Mammary epithelial cell (primary cell): ENCODE measurements at regions of chr19 and their contacts with region 1.

Region 1: DNA sequence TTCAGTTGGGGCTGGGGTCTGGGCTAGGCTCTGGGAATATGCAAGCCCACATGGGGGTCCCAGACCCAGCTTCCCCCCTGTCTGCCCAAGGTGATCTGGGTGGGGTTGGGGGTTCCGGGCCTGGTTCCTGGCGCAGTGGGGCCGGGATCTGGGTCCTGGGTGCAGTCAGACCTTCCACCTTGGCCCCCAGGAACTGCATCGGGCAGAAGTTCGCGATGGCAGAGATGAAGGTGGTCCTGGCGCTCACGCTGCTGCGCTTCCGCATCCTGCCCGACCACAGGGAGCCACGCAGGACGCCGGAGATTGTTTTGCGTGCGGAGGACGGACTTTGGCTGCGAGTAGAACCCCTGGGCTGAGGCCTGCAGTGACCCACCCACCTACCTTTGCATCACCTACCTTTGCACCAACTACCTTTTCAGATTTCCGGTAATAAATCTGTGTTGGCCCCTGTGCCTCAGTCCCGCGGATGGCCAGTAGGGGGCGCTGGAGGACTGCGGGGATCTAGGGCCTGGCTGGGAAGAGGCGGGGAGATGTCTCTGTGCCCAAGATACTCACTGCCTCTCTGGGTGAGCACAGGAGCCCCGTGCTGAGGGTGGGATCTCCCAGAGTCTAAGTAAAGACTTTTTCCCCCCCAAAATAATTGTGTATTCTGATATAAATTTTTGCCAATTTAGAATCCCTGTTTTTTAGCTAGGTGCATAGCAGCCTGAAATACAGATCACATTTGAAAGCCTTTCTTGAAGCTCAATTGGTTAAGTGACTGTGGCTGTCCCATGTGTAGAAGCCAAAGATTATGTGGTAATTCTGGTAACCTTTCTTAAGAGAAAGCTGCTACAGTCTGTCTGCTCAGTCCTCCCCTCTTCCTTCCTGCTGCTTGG is 11.5 kb upstream of the CYP4F3 start:
- DNase-seq: peak; percentile 64
- H3K4me3 ChIP-seq: peak overlapping the region in 1 of 3 experiments; percentile 12
- H3K27ac ChIP-seq: no peak overlapping the region
- H3K4me1 ChIP-seq: peaks cover 3% of the 10 kb centered on the region
- H3K27me3 ChIP-seq: no peaks in the 10 kb centered on the region
- CTCF ChIP-seq: peak; percentile 89 to 94

Region 2: DNA sequence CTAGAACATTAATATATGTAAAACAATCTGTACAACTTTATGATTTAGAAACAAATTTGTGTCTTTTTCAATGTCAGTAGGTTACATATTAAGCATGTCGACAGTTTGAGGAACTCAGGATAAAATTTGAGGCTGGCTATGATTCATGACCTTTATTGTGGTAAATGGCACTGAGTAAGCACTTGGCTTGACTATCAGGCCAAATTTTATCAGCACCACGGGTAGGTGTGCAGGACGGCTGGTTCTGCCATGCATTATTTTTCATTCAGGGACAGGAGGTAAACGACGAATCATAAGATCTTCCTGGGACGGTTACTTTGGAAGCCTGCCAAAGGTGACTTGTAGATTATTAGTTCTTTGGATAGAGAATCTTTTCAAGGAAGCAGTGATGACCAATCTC is 34.2 kb before region 1 on chr19:
- CTCF ChIA-PET with region 1: no interaction called
- dilution Hi-C with region 1: no loop called
- in situ Hi-C with region 1: no loop called
- intact Hi-C with region 1: no loop called
- DNase-seq: peak; percentile 65
- H3K4me3 ChIP-seq: no peak overlapping the region
- H3K27ac ChIP-seq: no peak overlapping the region
- H3K4me1 ChIP-seq: peaks cover 8% of the 10 kb centered on the region
- H3K27me3 ChIP-seq: peaks cover 5% of the 10 kb centered on the region
- CTCF ChIP-seq: no peak

Region 3: DNA sequence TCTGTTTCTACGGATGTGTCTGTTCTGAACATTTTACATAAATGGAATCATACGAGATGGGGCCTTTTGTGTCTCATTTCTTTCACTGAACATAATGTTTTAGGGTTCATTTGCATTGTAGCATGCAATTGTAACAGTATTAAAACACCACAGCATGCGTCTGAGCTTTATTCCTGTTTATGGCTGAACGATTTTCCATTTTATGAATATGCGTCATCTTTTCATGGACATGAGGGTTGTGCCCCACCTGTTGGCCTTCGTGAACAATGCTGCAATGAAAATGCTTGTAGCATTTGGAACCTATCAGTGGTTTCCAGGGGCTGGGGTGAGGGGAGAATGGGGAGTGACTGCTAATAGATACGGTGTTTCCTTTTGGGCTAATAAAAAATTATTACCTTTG is 181.1 kb after region 1 on chr19:
- CTCF ChIA-PET with region 1: no interaction called
- dilution Hi-C with region 1: no loop called
- in situ Hi-C with region 1: no loop called
- intact Hi-C with region 1: loop called (anchors 1 kb)
- DNase-seq: peak; percentile 38
- H3K4me3 ChIP-seq: no peak overlapping the region
- H3K27ac ChIP-seq: no peak overlapping the region
- H3K4me1 ChIP-seq: peaks cover 13% of the 10 kb centered on the region
- H3K27me3 ChIP-seq: peaks cover 2% of the 10 kb centered on the region
- CTCF ChIP-seq: peak in 1 of 2 donors; percentile 62

Region 4: DNA sequence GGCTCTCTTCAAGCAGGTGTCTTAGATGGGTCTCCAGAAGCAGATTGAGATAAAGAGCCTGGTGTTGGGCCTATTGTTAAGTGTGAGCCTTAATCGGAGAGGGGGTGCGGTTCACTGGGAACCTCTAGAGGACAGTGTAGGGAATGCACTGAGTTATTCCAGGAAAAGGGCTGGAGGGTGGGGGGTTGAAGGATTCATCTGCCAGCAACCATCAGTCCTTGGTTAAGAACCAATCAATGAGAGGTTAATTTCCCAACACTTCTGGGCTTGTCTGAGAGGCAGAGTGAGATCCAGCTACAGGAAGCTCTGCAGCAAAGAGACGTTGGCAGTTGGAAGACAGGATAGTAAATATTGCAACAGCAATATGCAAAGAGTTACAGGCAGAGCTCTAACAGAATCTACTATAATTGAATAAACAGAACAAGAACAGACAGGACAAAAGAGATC is 239.9 kb after region 1 on chr19:
- CTCF ChIA-PET with region 1: no interaction called
- dilution Hi-C with region 1: no loop called
- in situ Hi-C with region 1: loop called in 1 of 2 experiments (anchors 10 kb)
- intact Hi-C with region 1: loop called (anchors 1 kb)
- DNase-seq: peak; percentile 75
- H3K4me3 ChIP-seq: no peak overlapping the region
- H3K27ac ChIP-seq: no peak overlapping the region
- H3K4me1 ChIP-seq: peaks cover 12% of the 10 kb centered on the region
- H3K27me3 ChIP-seq: no peaks in the 10 kb centered on the region
- CTCF ChIP-seq: peak; percentile 80 to 87

Region 5: GRCh38 chr19:15897738-15898276 is 268.6 kb after region 1 on chr19 and contains the start of gene CYP4F2:
- CTCF ChIA-PET with region 1: no interaction called
- dilution Hi-C with region 1: loop called (anchors 5 kb)
- in situ Hi-C with region 1: no loop called
- intact Hi-C with region 1: no loop called
- DNase-seq: no peak
- H3K4me3 ChIP-seq: no peak within 1 kb of the TSS
- H3K27ac ChIP-seq: no peak within 1 kb of the TSS
- H3K4me1 ChIP-seq: peaks cover 8% of the 10 kb centered on the region
- H3K27me3 ChIP-seq: no peaks in the 10 kb centered on the region
- CTCF ChIP-seq: no peak
- total RNA-seq, gene CYP4F2: 0.33 to 0.68 TPM

Region 6: DNA sequence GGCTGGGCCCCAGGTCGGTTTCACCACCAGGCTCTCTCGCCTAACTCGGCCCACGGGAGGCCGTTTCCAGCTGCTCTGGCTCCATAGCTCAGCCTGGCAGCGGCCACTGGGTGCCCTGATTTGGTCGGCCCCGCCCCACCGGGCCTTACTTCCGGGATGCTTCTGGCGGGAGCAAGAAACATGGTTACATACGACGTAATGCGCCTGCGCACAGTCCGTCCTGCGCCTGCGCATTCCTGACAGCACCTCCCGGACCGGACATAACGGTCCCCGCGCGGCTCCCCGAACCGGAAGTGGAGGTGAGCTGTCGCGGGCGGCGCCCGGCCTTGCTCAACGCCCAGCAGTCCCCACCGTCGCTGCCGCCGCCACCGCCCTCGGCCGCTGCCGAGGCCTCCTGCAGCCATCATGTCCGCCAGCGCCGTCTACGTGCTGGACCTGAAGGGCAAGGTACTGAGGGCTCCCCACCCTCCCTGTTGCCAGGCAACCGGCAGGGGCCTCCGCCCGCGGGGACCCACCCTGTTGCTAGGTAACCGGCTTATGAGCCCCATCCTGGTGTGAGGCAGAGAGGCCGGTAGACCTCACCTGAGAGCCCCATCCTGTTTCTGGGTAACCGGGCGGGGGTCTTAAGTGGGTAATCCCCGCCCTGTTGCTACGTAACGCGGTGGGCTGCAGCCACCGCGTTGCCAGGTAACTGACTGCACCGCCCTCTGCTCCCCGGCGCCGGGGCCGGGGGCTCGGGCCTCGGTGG is 568.6 kb after region 1 on chr19 and contains the start of gene AP1M1:
- CTCF ChIA-PET with region 1: no interaction called
- dilution Hi-C with region 1: loop called (anchors 5 kb)
- in situ Hi-C with region 1: loop called in 1 of 2 experiments (anchors 25 kb)
- intact Hi-C with region 1: no loop called
- DNase-seq: peak; percentile 96
- H3K4me3 ChIP-seq: peak within 1 kb of the TSS; percentile 86 to 99 (median 95)
- H3K27ac ChIP-seq: peak within 1 kb of the TSS; percentile 74
- H3K4me1 ChIP-seq: peaks cover 25% of the 10 kb centered on the region
- H3K27me3 ChIP-seq: no peaks in the 10 kb centered on the region
- CTCF ChIP-seq: no peak
- total RNA-seq, gene AP1M1: 60.7 to 66.1 TPM

Region 7: GRCh38 chr19:16382775-16383543 is 753.7 kb after region 1 on chr19:
- CTCF ChIA-PET with region 1: no interaction called
- dilution Hi-C with region 1: no loop called
- in situ Hi-C with region 1: no loop called
- intact Hi-C with region 1: loop called (anchors 10 kb)
- DNase-seq: peak; percentile 59
- H3K4me3 ChIP-seq: no peak overlapping the region
- H3K27ac ChIP-seq: no peak overlapping the region
- H3K4me1 ChIP-seq: no peaks in the 10 kb centered on the region
- H3K27me3 ChIP-seq: no peaks in the 10 kb centered on the region
- CTCF ChIP-seq: peak; percentile 81 to 85